Heart right ventricle (tissue), 16 donors: ENCODE measurements at regions of chr12 and their contacts with region 1.

Region 1: GRCh38 chr12:3604748-3605586 is 114.0 kb downstream of the PRMT8 start:
- DNase-seq: peak; percentile 78 to 80
- ATAC-seq: peak; percentile 69 to 92 (median 82)
- H3K4me3 ChIP-seq: no peak overlapping the region
- H3K27ac ChIP-seq: peak overlapping the region in 8 of 10 donors; percentile 34 to 84 (median 78)
- H3K4me1 ChIP-seq: peaks cover 0 to 59% (median 34%) of the 10 kb centered on the region in 9 donors
- H3K27me3 ChIP-seq: peaks cover 0 to 14% (median 0%) of the 10 kb centered on the region in 7 donors
- CTCF ChIP-seq: no peak

Region 2: GRCh38 chr12:3491938-3492792 is 112.8 kb before region 1 on chr12:
- intact Hi-C with region 1: loop called in 2 of 10 experiments (anchors 10 kb)
- DNase-seq: peak; percentile 51 to 69
- ATAC-seq: peak in 7 of 8 donors; percentile 81 to 94 (median 90)
- H3K4me3 ChIP-seq: peak overlapping the region in 9 of 10 donors; percentile 24 to 52 (median 42)
- H3K27ac ChIP-seq: no peak overlapping the region
- H3K4me1 ChIP-seq: peaks cover 3 to 36% (median 17%) of the 10 kb centered on the region in 9 donors
- H3K27me3 ChIP-seq: peaks cover 4 to 82% (median 77%) of the 10 kb centered on the region in 7 donors
- CTCF ChIP-seq: no peak

Region 3: GRCh38 chr12:3533703-3534386 is 71.1 kb before region 1 on chr12:
- intact Hi-C with region 1: loop called in 5 of 10 experiments (anchors 5 to 10 kb)
- DNase-seq: peak; percentile 36 to 73
- ATAC-seq: peak; percentile 72 to 88 (median 82)
- H3K4me3 ChIP-seq: no peak overlapping the region
- H3K27ac ChIP-seq: peak overlapping the region; percentile 50 to 79 (median 72)
- H3K4me1 ChIP-seq: peaks cover 0 to 40% (median 21%) of the 10 kb centered on the region in 9 donors
- H3K27me3 ChIP-seq: peaks cover 0 to 3% (median 0%) of the 10 kb centered on the region in 7 donors
- CTCF ChIP-seq: peak in 7 of 9 donors; percentile 7 to 52 (median 23)